Activated naive CD4-positive, alpha-beta T cell treated with anti-CD3 and anti-CD28 coated beads for 36 hours (primary cell): ENCODE measurements at regions of chr5 and their contacts with region 1.

Region 1: DNA sequence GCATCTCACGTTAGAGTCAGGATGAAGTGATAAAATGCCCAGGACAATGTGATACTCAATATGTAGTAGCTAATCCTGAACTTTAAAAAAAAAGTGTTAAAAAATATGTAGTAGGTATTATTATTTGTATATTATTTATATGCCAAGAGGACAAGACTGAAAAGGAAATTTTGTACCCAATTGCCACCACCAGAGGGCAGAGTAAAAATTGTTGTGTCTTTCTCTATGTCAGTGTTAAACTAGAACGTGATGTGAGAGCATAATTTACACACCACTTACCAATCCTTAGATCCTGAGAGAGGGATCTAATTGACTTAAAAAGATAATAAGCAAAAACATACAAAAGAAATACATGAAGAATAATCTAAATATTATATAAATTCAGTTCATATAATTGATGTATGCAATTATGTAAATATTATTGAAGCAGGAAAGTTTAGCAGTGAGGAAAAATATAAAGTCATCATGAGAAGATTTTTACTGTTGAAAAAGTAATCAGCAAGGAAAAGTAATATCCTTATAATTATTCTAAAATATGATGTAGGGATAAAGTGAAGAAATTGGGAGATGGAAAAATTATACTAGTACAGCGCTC is 288.9 kb downstream of the RAB3C start:
- DNase-seq: peak; percentile 61
- H3K4me3 Mint-ChIP-seq: no peak overlapping the region
- H3K27ac Mint-ChIP-seq: no peak overlapping the region
- H3K4me1 Mint-ChIP-seq: no peaks in the 10 kb centered on the region
- H3K27me3 Mint-ChIP-seq: no peaks in the 10 kb centered on the region

Region 2: DNA sequence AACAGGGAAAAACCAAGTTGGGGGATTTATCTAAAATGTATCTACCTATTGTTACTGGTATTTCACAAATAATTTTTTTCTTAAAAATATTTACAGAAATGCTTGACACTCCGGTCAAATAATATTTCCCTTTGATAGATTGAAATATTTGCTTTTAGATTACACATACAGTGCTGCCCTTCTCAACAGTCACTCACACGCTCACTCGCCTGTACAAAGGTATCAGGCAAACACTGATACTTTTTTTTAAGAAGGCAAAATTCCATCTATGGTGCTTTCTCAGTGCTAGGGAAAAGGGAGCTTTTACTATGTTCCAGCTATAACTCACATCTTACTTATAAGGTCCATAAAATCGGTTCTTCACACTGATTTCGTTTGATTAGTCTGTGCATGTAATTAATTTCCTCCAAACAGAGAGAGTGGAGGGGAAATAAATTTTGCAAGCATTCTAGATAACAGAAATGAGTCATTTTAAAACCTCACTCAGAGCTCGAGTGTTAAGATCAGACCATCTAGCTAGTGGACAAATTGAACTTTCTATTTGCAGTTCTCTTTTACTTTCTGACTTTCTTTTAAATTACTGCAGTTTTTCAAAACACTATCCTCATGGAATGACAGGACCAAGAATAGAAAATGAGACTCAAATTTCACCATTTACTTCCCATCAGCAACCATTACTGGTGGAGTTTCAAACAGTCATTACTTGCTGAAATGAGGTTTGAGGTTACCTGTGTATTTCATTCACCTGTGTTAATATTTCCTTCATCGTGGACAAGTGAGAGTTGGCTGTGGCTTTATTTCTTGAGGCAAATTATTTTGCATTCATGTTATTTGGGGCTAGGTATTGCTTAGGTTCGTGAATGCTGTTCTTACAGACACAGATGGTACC is 15.7 kb before region 1 on chr5:
- CTCF ChIA-PET with region 1: interaction called, 10 read pairs
- intact Hi-C with region 1: no loop called
- DNase-seq: no peak
- H3K4me3 Mint-ChIP-seq: no peak overlapping the region
- H3K27ac Mint-ChIP-seq: no peak overlapping the region
- H3K4me1 Mint-ChIP-seq: no peaks in the 10 kb centered on the region
- H3K27me3 Mint-ChIP-seq: peaks cover 3% of the 10 kb centered on the region

Region 3: GRCh38 chr5:58922461-58923171 is 50.9 kb after region 1 on chr5:
- CTCF ChIA-PET with region 1: no interaction called
- intact Hi-C with region 1: no loop called
- DNase-seq: no peak
- H3K4me3 Mint-ChIP-seq: no peak overlapping the region
- H3K27ac Mint-ChIP-seq: no peak overlapping the region
- H3K4me1 Mint-ChIP-seq: peaks cover 42% of the 10 kb centered on the region
- H3K27me3 Mint-ChIP-seq: peaks cover 3% of the 10 kb centered on the region

Region 4: DNA sequence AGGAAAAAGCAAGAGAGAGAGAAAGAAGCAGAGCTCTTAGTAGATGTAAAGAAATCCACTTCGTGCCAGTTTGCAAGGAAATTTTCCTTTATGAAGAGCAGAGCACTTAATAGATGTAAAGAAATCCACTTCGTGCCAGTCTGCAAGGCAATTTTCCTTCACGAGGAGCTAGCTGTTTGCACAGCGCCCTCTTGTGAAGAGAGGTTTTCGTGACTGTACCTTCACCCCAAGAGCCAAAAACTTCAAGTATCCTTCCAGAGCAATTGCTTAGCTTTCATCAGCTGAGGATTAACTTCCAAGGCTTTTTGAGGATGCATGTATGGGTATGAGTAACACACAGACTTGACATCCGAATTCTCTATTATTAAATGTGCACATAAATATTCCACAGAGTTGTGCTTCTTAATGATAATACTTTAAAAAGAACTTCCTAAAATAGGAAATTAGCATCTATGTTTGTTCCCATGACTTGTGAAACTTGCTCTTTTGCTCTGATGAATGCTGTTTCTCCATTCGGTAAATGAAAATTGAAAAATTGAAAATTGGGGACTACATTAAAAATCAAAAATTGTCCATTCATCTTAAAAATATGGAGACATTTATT is 496.1 kb after region 1 on chr5:
- CTCF ChIA-PET with region 1: no interaction called
- intact Hi-C with region 1: loop called (anchors 5 kb)
- DNase-seq: peak; percentile 73
- H3K4me3 Mint-ChIP-seq: no peak overlapping the region
- H3K27ac Mint-ChIP-seq: no peak overlapping the region
- H3K4me1 Mint-ChIP-seq: peaks cover 5% of the 10 kb centered on the region
- H3K27me3 Mint-ChIP-seq: peaks cover 3% of the 10 kb centered on the region

Region 5: DNA sequence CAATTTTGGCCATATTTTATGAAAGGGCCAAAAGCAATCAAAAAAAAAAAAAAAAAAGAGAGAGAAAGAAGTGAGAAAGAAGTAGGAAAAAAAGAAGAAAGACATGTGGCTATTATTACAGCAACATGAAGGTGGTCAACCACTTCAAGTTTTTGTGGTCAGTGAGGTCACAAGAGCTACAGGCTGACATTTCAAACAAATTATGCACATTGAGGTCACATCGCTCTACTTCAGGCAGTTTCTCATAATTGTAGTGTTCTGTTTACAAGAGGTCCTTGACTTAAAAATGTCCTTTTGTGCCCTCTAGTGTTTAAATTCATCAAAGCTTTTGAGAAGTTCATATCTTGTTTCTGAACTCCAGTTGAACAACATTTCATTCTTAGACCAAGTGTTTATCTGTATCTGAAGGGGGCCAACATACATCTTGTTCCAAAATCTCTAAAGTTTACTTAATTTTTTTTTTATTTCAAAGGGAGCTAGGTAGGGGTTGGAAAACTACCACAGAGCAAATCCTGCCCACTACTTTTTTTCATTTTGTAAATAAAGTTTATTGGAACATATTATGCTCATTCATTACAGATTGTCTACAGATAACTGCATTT is 508.7 kb after region 1 on chr5:
- CTCF ChIA-PET with region 1: interaction called, 5 read pairs
- intact Hi-C with region 1: loop called (anchors 5 kb)
- DNase-seq: peak; percentile 15
- H3K4me3 Mint-ChIP-seq: no peak overlapping the region
- H3K27ac Mint-ChIP-seq: no peak overlapping the region
- H3K4me1 Mint-ChIP-seq: no peaks in the 10 kb centered on the region
- H3K27me3 Mint-ChIP-seq: no peaks in the 10 kb centered on the region